RWPE1 (cell line): ENCODE measurements at regions of chr3 and their contacts with region 1.

Region 1: DNA sequence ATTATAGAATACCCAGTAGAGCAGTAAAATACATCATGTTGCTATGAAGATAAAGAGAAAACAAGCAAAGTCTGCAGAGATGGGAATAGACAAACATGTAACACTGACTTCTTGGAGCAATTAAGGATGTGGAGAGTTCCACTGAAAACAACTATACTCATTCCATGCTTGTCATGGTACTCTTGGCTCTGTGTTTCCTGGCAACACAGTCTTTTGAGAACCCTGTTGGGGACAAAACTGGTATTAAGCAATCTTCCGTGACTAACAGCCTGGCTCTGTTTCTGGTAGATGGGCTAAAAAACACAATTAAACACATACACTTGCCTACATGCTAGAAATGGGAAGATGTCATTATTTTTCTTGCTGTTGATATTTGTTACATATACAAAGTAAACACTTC is 1212.3 kb upstream of the GBE1 start:
- DNase-seq: no peak
- H3K27ac ChIP-seq: no peak overlapping the region
- CTCF ChIP-seq: no peak

Region 2: DNA sequence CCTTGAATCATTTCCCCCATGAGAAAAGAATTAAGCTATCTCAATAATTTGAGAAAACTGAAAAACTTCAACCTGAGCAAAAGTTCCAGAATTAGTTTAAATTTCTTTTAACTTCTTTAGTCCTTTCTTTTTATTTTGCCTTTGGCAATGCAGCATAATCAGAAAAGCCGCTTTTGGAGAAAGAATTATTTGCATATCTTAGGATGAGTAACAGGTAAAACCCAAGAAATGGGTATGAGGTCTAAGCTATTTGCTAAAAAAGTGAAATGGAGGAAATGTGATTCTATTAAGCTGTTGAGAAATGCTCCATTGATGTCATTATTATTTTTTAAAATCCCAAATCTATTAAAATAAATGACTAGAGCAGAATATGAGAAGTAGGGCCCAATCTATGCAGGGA is 26.0 kb after region 1 on chr3:
- CTCF ChIA-PET with region 1: interaction called, 10 read pairs
- POLR2A ChIA-PET with region 1: no interaction called
- DNase-seq: no peak
- H3K27ac ChIP-seq: no peak overlapping the region
- CTCF ChIP-seq: no peak